ENCODE measurements at regions of chr11 and their contacts with region 1.

Region 1: DNA sequence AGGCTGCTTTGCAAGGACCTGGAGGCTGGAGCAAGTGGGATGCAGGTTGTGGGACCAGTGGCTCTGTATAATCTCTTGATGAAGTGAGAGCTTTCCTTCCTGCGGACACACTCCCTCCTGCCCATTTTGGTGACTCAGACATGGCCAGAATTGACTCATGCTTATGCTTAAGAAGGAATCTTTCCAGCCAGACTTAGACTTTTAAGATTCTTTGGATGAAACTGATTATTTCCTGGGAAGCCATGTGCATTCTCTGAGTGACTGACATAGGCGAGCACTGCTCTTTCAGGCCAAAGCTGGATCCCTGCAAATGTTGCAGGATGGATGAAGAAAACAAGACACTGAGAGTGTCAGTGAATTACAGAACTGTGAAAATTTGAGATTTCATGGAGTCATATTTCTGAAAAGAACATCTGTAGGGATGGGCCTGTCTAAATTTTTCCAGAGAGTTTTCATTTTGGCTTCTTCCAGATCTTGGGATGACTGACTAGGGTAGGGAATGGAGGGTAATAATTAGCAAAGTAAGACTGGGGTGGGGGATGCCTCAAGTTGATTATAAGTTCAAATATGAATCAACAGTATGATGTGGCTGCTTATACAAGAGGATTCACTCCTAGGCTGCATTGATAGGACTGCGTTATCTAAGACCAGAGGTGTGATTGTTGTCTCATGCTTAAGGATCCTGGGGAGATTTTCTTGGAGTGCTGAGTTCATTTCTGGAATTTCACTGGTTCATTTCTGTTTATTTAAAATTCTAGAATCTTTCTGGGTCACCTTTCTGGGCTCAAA is 195.8 kb downstream of the HIPK3 start:
- DNase-seq: no peak
- H3K4me3 ChIP-seq: no peak overlapping the region
- H3K27ac ChIP-seq: no peak overlapping the region
- H3K4me1 ChIP-seq: peaks cover 40% of the 10 kb centered on the region
- CTCF ChIP-seq: no peak

Region 2: GRCh38 chr11:33463059-33463458 is 10.0 kb after region 1 on chr11:
- CTCF ChIA-PET with region 1: no interaction called
- POLR2A ChIA-PET with region 1: interaction called, 12 read pairs
- intact Hi-C with region 1: no loop called
- DNase-seq: no peak
- H3K4me3 ChIP-seq: no peak overlapping the region
- H3K27ac ChIP-seq: no peak overlapping the region
- H3K4me1 ChIP-seq: peaks cover 70% of the 10 kb centered on the region
- CTCF ChIP-seq: no peak

Region 3: GRCh38 chr11:34318111-34319037 is 865.3 kb after region 1 on chr11:
- CTCF ChIA-PET with region 1: no interaction called
- POLR2A ChIA-PET with region 1: no interaction called
- intact Hi-C with region 1: no loop called
- DNase-seq: no peak
- H3K4me3 ChIP-seq: no peak overlapping the region
- H3K27ac ChIP-seq: no peak overlapping the region
- H3K4me1 ChIP-seq: peaks cover under 1% of the 10 kb centered on the region
- CTCF ChIP-seq: no peak

Measured in OCI-LY7 (cell line).